IMR-90 (cell line): ENCODE measurements at regions of chr10 and their contacts with region 1.

Region 1: GRCh38 chr10:6755781-6756460 is 175.8 kb upstream of the PRKCQ start:
- DNase-seq: peak; percentile 87
- ATAC-seq: peak; percentile 96
- H3K4me3 ChIP-seq: no peak overlapping the region
- H3K27ac ChIP-seq: peak overlapping the region; percentile 47
- H3K4me1 ChIP-seq: peaks cover 2% of the 10 kb centered on the region; the same call in 1 of the 2 replicates
- H3K27me3 ChIP-seq: no peaks in the 10 kb centered on the region
- CTCF ChIP-seq: no peak
- POLR2A ChIP-seq: no peak
- RAD21 ChIP-seq: no peak

Region 2: GRCh38 chr10:6144406-6145165 is 611.3 kb before region 1 on chr10:
- CTCF ChIA-PET with region 1: no interaction called
- POLR2A ChIA-PET with region 1: no interaction called
- dilution Hi-C with region 1: no loop called
- in situ Hi-C with region 1: loop called (anchors 25 kb)
- intact Hi-C with region 1: no loop called
- DNase-seq: peak; percentile 82
- ATAC-seq: peak; percentile 89
- H3K4me3 ChIP-seq: peak overlapping the region; percentile 75
- H3K27ac ChIP-seq: peak overlapping the region; percentile 93
- H3K4me1 ChIP-seq: peaks cover 21% of the 10 kb centered on the region
- H3K27me3 ChIP-seq: no peaks in the 10 kb centered on the region
- CTCF ChIP-seq: no peak
- POLR2A ChIP-seq: peak; percentile 90
- RAD21 ChIP-seq: no peak

Region 3: DNA sequence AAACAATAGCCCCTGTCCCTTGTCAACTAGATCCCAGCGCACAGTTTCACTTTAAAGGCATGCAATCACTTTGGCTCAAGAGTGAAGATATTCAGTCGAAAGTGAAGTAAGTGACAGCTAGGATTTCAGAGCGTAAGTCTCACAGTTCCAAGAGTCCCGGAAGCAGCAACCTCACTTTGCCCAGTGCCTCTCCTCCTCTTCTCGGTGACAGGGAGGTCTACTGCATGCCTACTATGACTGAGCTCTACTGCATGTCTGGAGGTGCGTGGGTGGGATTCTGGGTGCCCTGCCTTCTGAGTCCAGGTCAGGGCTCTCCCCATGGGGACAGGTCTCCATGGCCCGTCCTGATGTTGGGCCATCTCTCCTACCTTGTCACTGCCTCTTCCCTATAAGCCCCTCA is 192.8 kb before region 1 on chr10:
- CTCF ChIA-PET with region 1: no interaction called
- POLR2A ChIA-PET with region 1: no interaction called
- dilution Hi-C with region 1: no loop called
- in situ Hi-C with region 1: no loop called
- intact Hi-C with region 1: no loop called
- DNase-seq: no peak
- ATAC-seq: no peak
- H3K4me3 ChIP-seq: no peak overlapping the region
- H3K27ac ChIP-seq: no peak overlapping the region
- H3K4me1 ChIP-seq: no peaks in the 10 kb centered on the region
- H3K27me3 ChIP-seq: no peaks in the 10 kb centered on the region; the same call in 1 of the 2 replicates
- CTCF ChIP-seq: no peak
- POLR2A ChIP-seq: no peak
- RAD21 ChIP-seq: no peak